Heart left ventricle (tissue), 16 donors: ENCODE measurements at regions of chr1 and their contacts with region 1.

Region 1: GRCh38 chr1:246566128-246566812 is at the starts of genes CNST and TFB2M:
- DNase-seq: peak; percentile 98 to 99 (median 98)
- ATAC-seq: peak; percentile 97 to 99 (median 98)
- H3K4me3 ChIP-seq: peak within 1 kb of the TSS; percentile 65 to 99 (median 93)
- H3K27ac ChIP-seq: peak within 1 kb of the TSS; percentile 90 to 98 (median 96)
- H3K4me1 ChIP-seq: peaks cover 15 to 60% (median 51%) of the 10 kb centered on the region in 12 donors
- H3K27me3 ChIP-seq: no peaks in the 10 kb centered on the region
- CTCF ChIP-seq: peak in 2 of 12 donors; percentile 15 to 18
- POLR2A ChIP-seq: peak; percentile 70 to 82
- total RNA-seq, gene CNST: 14.0 to 23.9 (median 19.1) TPM
- total RNA-seq, gene TFB2M: 10.5 to 14.5 (median 12.8) TPM

Region 2: DNA sequence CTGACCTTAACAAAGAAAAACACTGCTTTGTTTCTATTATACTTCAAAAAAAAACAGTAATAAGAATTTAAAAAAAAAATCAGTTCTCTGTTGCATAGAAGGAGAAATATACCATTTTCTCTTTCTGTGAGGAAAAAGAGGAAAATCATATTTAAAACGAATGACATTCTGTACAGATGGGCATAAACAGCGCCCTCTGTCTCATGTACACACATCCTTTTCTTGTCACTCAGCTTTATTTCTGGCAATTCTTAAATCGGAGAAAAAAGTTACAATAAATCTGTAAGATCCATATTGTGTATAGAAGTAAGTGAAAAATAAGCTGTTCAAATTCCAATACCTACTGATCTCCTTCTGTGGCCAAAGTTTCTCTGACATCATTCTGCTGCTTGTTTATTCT is 304.6 kb before region 1 on chr1:
- intact Hi-C with region 1: no loop called
- DNase-seq: no peak
- ATAC-seq: no peak
- H3K4me3 ChIP-seq: no peak overlapping the region
- H3K27ac ChIP-seq: no peak overlapping the region
- H3K4me1 ChIP-seq: no peaks in the 10 kb centered on the region
- H3K27me3 ChIP-seq: no peaks in the 10 kb centered on the region
- CTCF ChIP-seq: peak in 3 of 12 donors; percentile 10 to 22 (median 16)
- POLR2A ChIP-seq: no peak

Region 3: GRCh38 chr1:246459221-246459620 is 107.0 kb before region 1 on chr1:
- intact Hi-C with region 1: no loop called
- DNase-seq: no peak
- ATAC-seq: no peak
- H3K4me3 ChIP-seq: no peak overlapping the region
- H3K27ac ChIP-seq: no peak overlapping the region
- H3K4me1 ChIP-seq: peaks cover 0 to 13% (median 1%) of the 10 kb centered on the region in 12 donors
- H3K27me3 ChIP-seq: no peaks in the 10 kb centered on the region
- CTCF ChIP-seq: no peak
- POLR2A ChIP-seq: no peak

Region 4: GRCh38 chr1:246506674-246507481 is 59.4 kb before region 1 on chr1 and contains the start of gene SMYD3:
- intact Hi-C with region 1: loop called in 1 of 10 experiments (anchors 5 kb)
- DNase-seq: peak; percentile 72 to 89 (median 83)
- ATAC-seq: peak; percentile 95 to 100 (median 98)
- H3K4me3 ChIP-seq: peak within 1 kb of the TSS; percentile 66 to 90 (median 77)
- H3K27ac ChIP-seq: peak within 1 kb of the TSS in 9 of 12 donors; percentile 27 to 73 (median 57)
- H3K4me1 ChIP-seq: peaks cover 0 to 16% (median 7%) of the 10 kb centered on the region in 12 donors
- H3K27me3 ChIP-seq: no peaks in the 10 kb centered on the region
- CTCF ChIP-seq: peak in 4 of 12 donors; percentile 19 to 44 (median 40)
- POLR2A ChIP-seq: peak in 1 of 2 donors; percentile 78
- total RNA-seq, gene SMYD3: 6.6 to 12.1 (median 9.5) TPM

Region 5: DNA sequence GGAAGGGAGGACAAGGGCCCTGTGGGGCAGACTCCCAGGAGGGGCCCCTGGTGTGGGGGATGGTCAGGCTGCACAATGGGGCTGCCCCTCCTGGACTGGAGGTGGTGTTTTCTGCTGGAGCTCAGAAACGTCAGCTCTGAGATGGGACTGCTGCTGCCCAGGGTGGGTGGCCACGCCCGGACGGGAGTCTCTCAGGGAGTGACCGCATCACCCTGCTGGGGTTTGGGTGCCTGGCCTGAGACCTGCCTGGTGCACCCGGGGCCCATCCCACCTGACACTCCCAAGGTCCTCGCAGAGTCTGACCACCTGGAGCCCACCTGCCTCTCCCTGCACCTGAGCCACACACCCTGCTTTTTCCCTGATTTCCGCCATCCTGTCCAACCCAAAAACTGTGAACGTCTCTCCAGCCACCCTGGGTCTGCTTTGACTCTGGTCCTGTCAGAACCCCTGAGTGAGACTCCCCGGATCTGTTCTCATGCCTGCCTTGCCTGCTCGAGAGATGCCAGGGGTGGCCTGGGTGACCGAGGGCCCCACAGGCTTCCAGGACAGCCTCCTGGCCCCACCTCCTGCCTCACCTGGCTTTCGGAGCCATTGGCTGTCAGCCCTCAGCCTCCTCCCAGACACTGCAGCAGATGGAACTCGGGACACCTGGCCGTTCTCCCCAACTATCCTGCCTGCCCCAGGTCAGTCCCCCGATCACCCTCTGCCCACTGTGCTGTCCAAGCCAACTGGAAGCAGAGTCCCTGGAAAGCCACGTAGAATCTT is 47.6 kb before region 1 on chr1:
- intact Hi-C with region 1: no loop called
- DNase-seq: no peak
- ATAC-seq: no peak
- H3K4me3 ChIP-seq: no peak overlapping the region
- H3K27ac ChIP-seq: no peak overlapping the region
- H3K4me1 ChIP-seq: no peaks in the 10 kb centered on the region
- H3K27me3 ChIP-seq: no peaks in the 10 kb centered on the region
- CTCF ChIP-seq: no peak
- POLR2A ChIP-seq: no peak

Region 6: DNA sequence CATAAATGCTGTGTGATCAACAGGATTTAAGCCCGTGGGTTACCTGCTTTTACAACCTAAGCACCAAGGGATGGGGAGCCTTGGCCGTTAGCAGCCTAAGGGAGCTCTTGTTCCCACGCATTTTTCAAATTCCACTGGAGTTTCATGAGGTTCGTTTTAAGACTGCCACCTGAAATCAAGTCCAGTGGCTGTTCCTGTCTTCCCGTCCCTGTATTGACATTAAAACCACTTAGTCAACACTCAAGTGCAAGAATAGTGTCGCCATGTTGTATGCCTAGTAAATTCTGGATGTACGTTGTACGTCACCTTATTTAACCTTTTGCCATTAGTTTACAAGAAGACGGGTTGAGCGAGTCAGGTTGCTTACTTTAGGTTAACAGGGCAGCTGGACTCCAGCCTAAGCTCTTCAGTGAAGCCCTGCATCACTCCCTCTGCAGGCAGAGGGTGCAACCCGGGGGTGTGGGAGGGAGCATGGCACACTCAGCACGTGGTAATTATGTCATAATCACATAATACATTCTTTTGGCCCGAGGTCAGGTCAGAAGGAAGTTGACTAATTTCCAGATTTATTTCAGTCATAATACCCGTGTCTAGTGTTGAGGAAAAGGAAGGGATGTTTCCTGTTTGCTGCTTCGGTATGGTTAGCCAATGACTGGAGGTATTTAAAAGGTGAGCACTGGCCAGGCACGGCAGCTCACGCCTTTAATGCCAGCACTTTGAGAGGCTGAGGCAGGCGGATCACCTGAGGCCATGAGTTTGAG is 42.5 kb after region 1 on chr1:
- intact Hi-C with region 1: loop called in 7 of 10 experiments (anchors 2 to 5 kb)
- DNase-seq: peak; percentile 69 to 81 (median 72)
- ATAC-seq: peak; percentile 86 to 94 (median 94)
- H3K4me3 ChIP-seq: peak overlapping the region in 2 of 12 donors; percentile 0 to 6
- H3K27ac ChIP-seq: peak overlapping the region in 11 of 12 donors; percentile 59 to 85 (median 67)
- H3K4me1 ChIP-seq: peaks cover 6 to 43% (median 23%) of the 10 kb centered on the region in 12 donors
- H3K27me3 ChIP-seq: no peaks in the 10 kb centered on the region
- CTCF ChIP-seq: peak in 9 of 12 donors; percentile 15 to 49 (median 35)
- POLR2A ChIP-seq: no peak

Region 7: DNA sequence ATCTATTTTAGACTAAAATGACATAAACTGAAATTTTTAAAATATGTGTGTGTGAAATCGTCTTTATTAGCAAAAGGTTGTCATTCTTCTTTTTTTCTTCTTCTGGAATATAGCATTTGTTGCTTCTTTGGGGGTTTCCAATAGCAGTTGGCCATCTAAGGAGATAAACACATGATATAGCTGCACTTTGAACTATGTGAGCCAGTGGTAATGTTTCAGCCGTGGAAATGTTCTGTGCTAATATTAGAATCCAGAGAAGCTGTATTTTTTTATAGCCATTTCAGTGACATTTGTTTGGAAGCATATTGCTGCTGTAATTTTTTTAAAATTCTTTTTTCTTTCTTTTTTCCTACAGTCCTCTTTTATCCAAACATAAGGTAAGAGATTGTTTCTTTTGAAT is 75.1 kb after region 1 on chr1:
- intact Hi-C with region 1: loop called in 5 of 10 experiments (anchors 5 to 10 kb)
- DNase-seq: no peak
- ATAC-seq: peak; percentile 49 to 73 (median 54)
- H3K4me3 ChIP-seq: no peak overlapping the region
- H3K27ac ChIP-seq: peak overlapping the region in 9 of 12 donors; percentile 7 to 59 (median 23)
- H3K4me1 ChIP-seq: peaks cover 0 to 22% (median 7%) of the 10 kb centered on the region in 12 donors
- H3K27me3 ChIP-seq: no peaks in the 10 kb centered on the region
- CTCF ChIP-seq: no peak
- POLR2A ChIP-seq: no peak

Region 8: DNA sequence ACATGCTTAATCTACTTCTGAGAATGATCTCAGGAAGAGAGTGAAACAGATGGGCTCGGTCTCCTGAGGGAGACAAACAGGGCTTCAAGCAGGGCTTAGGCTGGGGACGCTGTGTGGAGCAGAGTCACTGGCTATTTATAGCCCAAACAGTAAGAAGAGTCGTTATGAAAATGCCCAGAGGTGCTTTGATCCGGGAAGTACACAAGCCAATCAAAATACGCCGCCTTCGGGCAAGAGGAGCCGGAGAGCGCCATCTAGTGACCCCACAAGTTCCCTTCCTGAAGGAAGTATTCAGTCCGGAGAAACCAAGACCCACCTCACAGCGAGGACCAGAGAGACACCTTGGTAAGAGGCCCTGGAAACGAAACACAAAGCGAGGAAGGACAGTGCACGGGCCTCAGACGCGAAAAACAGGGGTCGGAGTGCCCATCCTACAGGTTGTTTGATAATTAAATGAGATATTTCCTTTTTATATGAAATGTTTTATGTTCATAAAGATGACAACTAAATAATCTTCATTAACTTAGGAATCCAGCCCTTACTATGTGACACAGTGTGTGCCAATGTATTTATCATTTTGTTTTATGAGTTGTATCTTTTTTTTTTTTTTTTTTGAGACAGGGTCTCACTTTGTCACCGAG is 132.9 kb after region 1 on chr1:
- intact Hi-C with region 1: loop called in 7 of 10 experiments (anchors 1 to 5 kb)
- DNase-seq: peak; percentile 87 to 91 (median 88)
- ATAC-seq: peak; percentile 91 to 97 (median 96)
- H3K4me3 ChIP-seq: peak overlapping the region in 8 of 12 donors; percentile 22 to 52 (median 38)
- H3K27ac ChIP-seq: peak overlapping the region in 11 of 12 donors; percentile 26 to 80 (median 68)
- H3K4me1 ChIP-seq: peaks cover 0 to 18% (median 9%) of the 10 kb centered on the region in 12 donors
- H3K27me3 ChIP-seq: no peaks in the 10 kb centered on the region
- CTCF ChIP-seq: peak; percentile 76 to 97 (median 89)
- POLR2A ChIP-seq: no peak